ENCODE measurements at regions of chr1 and their contacts with region 1.

Region 1: DNA sequence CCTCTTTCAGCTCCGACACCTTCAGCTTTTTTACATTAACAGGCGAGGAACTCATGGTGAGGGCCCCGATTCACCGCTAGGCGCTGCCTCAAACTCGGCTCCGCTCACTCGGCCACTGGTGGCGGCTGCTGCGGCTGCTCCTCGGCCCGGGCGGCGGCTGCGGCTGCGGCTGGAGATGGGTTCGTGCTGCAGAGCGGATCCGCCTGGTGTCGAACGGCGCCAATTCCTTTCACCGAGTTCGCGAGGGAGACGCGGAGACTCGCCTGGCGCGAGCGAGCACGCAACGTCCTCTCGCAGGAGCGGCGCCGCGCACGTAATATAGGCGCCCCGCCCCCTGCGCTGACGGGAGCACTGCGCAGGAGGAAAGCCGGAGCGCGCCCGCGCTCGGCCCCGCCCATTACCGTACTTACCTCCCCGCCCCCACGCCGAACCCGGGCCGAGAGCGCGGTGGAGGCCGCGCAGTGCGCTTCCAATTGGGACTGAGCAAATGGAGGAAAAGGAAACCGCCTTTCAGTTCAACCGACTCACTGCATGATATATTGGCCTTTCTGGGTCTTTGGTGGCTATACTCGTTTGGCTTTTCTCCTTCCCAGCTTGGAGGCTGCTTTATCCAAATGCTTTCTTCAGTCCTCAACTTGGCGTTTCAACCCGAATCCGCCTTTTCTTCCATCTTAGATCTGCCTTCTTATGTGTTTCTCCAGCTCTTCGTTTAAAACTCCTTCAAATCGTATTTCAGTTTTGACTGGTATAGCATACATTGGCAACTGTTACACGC is at the start of gene HNRNPU:
- DNase-seq: peak; percentile 93
- CTCF ChIP-seq: peak; percentile 15

Region 2: GRCh38 chr1:244835276-244836134 is 28.9 kb before region 1 on chr1 and contains the start of gene COX20:
- CTCF ChIA-PET with region 1: interaction called, 204 read pairs
- POLR2A ChIA-PET with region 1: interaction called, 8 read pairs
- DNase-seq: peak; percentile 83
- CTCF ChIP-seq: no peak

Region 3: DNA sequence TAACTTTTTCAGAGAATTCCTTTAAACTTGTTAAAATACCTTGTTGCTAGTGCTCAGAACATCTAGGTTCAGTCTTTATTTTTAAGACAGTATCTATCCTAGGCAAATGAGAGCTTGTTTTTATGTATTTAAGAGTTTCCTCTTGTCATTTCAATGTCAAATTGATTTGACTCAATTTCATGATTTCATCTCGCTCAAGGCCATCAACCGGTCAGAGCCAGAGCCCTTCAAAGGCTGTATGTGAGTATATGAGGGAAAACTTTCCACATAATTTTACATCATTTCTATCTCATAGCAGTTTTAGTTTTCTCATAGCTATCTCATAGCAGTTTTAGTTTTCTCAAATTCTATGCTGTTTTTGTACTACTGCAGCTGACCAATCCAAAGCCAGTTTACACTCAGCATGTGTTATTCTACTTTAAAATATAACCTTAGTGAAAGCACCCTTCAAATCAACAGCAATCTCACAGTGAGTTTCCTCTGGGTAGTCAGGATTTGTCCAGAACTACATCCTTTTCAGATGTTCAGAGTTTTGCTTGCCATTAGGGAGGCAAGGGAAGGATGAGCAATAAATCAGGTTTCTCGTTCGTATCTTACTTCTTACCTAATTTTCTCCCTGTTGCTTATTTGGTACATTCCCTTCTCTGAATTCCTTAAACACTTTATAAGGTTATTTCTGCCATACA is 12.8 kb before region 1 on chr1:
- CTCF ChIA-PET with region 1: interaction called, 204 read pairs
- POLR2A ChIA-PET with region 1: interaction called, 13 read pairs
- DNase-seq: no peak
- CTCF ChIP-seq: no peak

Region 4: GRCh38 chr1:244881552-244882280 is 17.3 kb after region 1 on chr1:
- CTCF ChIA-PET with region 1: no interaction called
- POLR2A ChIA-PET with region 1: no interaction called
- DNase-seq: no peak
- CTCF ChIP-seq: no peak

Region 5: GRCh38 chr1:244970661-244971551 is 106.5 kb after region 1 on chr1:
- CTCF ChIA-PET with region 1: interaction called, 4 read pairs
- POLR2A ChIA-PET with region 1: interaction called, 12 read pairs
- DNase-seq: peak; percentile 86
- CTCF ChIP-seq: peak; percentile 75